Activated CD4-positive, alpha-beta T cell treated with anti-CD3 and anti-CD28 coated beads for 36 hours (primary cell): ENCODE measurements at regions of chr6 and their contacts with region 1.

Region 1: DNA sequence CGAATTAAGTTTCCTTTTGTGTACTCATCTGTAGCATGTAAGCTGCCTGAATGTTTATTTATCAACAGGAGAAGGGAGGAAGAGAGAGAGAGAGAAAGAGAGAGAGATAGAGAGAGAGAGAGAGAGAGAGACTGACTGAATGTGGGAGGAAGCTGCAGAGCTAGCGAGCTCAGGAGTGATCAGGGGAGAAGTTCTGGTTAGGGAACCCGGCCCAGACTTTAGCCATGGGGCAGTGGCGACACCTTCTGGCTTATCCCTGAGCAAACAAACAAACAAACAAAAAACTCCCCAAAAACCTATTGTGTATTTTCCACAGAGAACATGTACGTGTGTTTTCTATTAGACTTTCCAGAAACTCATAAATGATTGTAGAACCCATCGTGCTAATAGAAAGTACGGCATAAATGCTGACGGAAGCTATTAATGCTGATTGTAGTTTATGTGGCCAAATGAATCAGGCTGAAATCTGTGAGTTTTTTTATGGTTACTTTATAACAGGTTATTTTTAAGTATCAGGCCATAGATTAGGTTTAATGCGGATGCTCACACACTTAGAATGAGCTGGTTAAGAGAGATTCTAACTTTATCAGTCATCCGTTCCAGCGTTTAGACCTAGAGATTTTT is 92.8 kb downstream of the CLIC5 start:
- DNase-seq: peak; percentile 83
- ATAC-seq: peak; percentile 22
- H3K4me3 Mint-ChIP-seq: peak overlapping the region; percentile 15
- H3K27ac Mint-ChIP-seq: peak overlapping the region; percentile 90
- H3K4me1 Mint-ChIP-seq: peaks cover 53% of the 10 kb centered on the region
- H3K27me3 Mint-ChIP-seq: no peaks in the 10 kb centered on the region

Region 2: DNA sequence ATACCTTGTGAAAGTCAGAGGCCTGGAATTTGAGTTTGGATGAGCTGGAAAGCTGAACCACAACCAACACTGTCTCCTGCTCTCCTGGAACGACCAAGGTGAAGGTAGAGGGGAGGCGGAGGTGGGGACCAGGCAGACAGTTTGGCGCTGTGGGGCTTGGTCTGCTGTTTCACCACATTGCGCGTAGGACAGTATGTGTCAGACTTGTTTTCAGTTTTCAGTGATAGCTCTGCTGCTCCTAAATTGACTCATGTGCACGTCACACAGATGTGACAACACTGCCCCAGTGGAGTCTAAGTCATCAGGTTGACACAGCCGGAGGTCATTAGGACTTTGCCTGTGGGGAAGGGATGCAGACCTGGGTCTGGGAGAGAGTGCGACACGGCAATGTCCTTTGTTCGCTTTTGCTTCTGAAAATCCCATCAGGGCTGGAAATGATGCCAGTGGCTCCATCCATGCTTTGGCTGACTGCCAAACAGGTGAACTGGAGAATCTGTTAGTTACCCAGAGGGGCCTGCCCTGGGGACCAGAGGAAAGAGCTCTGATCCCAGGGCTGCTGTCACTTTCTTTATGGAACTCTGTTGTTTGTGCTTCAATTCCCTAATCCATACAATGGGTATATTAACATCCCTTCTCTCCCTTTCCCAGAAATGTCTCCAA is 1279.8 kb before region 1 on chr6:
- CTCF ChIA-PET with region 1: no interaction called
- POLR2A ChIA-PET with region 1: no interaction called
- intact Hi-C with region 1: loop called (anchors 2 to 5 kb)
- DNase-seq: peak; percentile 85
- ATAC-seq: peak; percentile 87
- H3K4me3 Mint-ChIP-seq: peak overlapping the region; percentile 21
- H3K27ac Mint-ChIP-seq: peak overlapping the region; percentile 93
- H3K4me1 Mint-ChIP-seq: peaks cover 38% of the 10 kb centered on the region
- H3K27me3 Mint-ChIP-seq: peaks cover 2% of the 10 kb centered on the region

Region 3: DNA sequence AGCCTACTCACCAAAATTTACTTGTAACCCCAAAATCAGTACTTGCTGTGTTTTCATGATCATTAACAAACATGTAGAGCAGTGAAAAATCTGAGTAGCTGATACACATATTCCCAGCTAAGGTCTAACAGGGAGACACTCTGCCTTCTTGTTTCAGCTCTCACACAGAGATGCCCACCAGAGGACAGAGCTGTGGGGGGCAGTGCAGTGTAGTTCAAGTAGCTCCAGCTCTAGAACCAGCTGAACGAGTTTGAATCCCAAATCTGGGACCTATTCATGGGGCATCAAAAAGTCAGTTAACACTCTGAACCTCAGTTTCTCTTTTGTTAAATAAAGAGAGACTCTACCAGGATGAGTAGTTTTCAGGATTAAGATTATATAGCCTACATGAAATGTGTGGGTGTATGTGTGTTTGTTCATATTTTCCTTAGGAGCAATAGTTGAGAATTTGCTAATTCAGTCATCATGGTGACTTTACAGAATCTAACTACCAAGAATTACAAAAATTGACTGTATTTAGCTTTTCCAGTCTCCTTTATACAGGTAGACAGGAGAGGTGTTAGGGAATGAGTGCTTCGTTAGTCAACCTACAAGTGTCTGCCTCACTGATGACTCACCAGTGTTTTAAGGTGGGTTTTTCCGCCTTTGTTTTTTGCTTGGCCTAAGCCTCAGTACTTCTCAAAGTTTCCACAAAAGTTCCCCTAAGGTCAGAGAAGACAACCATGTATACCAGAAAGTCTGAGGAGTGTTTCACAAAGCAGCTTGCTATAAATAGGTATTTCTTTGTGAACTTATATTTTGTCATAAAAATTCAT is 758.7 kb before region 1 on chr6:
- CTCF ChIA-PET with region 1: no interaction called
- POLR2A ChIA-PET with region 1: no interaction called
- intact Hi-C with region 1: loop called (anchors 1 to 5 kb)
- DNase-seq: peak; percentile 61
- ATAC-seq: peak; percentile 92
- H3K4me3 Mint-ChIP-seq: peak overlapping the region; percentile 21
- H3K27ac Mint-ChIP-seq: peak overlapping the region; percentile 93
- H3K4me1 Mint-ChIP-seq: peaks cover 47% of the 10 kb centered on the region
- H3K27me3 Mint-ChIP-seq: no peaks in the 10 kb centered on the region

Region 4: DNA sequence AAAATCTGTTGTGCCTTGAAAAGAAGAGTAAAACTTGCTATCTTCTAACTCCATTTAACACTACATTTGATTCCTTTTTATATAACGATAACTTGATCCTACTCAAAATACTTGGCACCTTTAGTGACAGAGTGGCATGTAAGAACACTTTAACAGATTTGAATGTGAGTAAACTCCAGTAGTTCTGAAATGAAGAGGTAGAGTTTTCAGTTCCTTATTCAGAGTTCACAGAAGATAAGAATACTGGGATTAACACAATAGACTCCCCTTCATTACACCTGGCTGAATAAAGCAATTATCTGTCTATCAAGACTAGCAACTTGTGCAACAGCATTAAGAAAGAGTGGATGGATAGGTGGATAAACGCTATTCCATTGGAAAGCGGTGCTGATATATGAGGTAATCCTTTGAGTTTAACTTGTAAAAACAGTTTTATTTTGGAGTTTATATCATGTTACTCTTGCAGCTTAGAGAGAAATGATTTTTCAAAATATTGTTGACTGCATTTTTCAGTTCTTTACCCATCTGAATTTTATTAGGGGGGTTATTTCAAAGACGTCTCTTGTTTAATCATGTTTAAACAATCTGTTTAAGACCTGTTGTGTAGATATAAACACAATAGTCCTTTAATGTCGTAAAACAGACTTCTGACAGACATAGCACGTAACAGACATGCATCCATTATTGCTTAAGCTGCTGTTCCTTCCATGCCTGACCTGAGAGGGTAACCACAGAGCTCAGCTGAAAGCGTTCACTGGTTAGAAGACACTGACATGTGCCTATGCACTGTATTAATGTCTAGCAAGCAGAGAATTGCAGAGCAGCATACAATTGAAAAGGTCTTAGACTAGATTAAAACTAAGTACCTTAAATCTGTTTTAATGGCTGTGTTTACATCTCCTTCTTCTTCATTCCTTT is 442.7 kb before region 1 on chr6:
- CTCF ChIA-PET with region 1: no interaction called
- POLR2A ChIA-PET with region 1: no interaction called
- intact Hi-C with region 1: loop called (anchors 1 to 5 kb)
- DNase-seq: peak; percentile 18
- ATAC-seq: peak; percentile 47
- H3K4me3 Mint-ChIP-seq: no peak overlapping the region
- H3K27ac Mint-ChIP-seq: peak overlapping the region; percentile 44
- H3K4me1 Mint-ChIP-seq: peaks cover 34% of the 10 kb centered on the region
- H3K27me3 Mint-ChIP-seq: no peaks in the 10 kb centered on the region

Region 5: DNA sequence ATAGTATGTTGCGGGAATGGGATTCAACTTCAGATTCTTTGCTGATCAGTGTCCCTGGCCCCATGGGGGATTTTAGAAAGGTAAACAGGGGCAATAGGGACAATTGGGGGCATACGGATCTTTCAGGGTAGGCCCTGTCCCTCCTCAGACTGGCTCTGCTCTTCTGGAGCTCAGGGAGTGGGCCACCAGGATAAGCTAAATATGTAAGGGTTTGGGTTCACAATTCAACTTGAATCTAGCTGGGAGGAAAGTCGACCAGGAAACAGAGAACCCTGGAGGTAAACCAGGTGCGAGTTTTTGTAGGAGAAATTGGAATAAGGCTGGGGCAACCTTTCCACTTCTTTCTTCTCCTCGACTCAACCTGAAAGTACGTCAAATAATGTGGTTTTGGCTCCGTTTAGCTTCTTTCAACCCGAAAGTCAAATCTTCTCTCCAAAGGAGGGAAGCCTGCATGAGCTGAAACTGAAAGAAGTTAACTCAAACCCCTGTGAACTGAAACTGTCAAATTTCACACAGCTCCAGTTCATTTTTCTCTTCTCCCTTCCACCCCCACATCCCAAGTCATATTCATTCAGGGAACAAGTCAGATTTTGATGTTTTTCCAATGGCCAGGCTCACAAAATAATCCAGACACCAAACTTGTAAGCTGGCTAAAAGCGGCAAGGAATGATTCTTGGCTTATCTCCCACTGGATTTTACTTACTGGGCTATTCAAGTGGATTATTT is 185.3 kb before region 1 on chr6:
- CTCF ChIA-PET with region 1: interaction called, 9 read pairs
- POLR2A ChIA-PET with region 1: no interaction called
- intact Hi-C with region 1: loop called (anchors 1 kb)
- DNase-seq: peak; percentile 27
- ATAC-seq: peak; percentile 75
- H3K4me3 Mint-ChIP-seq: peak overlapping the region; percentile 13
- H3K27ac Mint-ChIP-seq: peak overlapping the region; percentile 84
- H3K4me1 Mint-ChIP-seq: peaks cover 56% of the 10 kb centered on the region
- H3K27me3 Mint-ChIP-seq: peaks cover 12% of the 10 kb centered on the region

Region 6: DNA sequence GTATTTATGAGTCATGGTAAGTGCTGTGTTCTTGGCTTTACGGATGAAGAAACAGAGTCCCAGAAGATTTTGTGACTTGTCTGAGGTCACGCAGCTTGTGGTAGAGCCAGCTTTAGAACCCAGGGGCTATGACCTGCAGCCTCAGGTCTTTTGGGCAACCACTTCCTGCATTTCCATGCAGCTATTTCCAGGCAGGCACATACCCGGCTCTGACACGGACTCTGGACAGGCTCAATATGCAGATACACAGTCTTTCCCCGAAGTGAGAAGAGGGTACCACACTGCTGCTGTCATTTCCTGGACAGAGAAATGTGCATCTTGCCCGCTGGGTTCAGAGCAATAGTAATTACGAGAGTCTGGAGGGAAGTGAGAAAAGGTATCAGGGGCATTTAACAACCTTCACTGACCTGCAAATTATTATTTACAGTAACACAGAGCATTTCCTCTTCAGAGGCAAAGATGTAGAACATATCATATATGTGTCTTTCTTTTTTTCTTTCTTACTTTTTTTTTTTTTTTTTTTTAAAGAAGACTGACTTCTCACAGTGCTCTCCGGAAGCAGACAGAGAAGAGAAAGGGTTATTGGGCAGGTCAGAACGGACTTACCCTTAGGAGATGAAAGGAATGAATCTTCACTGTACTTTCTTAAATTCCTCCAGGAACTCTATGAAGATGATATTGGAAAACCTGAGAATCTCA is 92.2 kb before region 1 on chr6:
- CTCF ChIA-PET with region 1: interaction called, 4 read pairs
- POLR2A ChIA-PET with region 1: interaction called, 3 read pairs
- intact Hi-C with region 1: loop called (anchors 1 to 2 kb)
- DNase-seq: peak; percentile 79
- ATAC-seq: peak; percentile 79
- H3K4me3 Mint-ChIP-seq: peak overlapping the region; percentile 63
- H3K27ac Mint-ChIP-seq: peak overlapping the region; percentile 93
- H3K4me1 Mint-ChIP-seq: peaks cover 46% of the 10 kb centered on the region
- H3K27me3 Mint-ChIP-seq: peaks cover 4% of the 10 kb centered on the region